ENCODE measurements at regions of chr11 and their contacts with region 1.

Region 1: DNA sequence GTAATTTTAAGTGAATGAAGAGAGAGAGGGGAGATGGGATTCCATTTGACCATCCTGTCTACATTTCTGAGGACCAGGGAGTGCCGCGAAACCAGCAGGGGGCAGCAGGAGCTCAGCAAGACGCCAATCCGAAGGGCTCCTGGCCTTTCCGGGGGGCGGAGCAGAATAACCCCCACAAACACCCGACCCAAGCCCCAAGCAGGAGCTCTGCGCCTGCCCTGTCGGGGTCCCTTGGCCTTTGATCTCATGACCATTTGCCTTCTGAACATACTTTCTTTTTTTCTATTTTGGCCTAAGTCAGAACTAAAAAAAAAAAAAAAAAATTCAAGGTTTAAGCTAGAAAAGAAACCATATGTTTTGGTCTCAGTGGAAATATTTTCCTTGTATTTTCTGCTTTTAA is 21.9 kb upstream of the SCN2B start:
- DNase-seq: peak; percentile 90
- ATAC-seq: peak; percentile 31
- H3K4me3 Mint-ChIP-seq: peak overlapping the region; percentile 43
- H3K27ac Mint-ChIP-seq: peak overlapping the region; percentile 72
- H3K4me1 Mint-ChIP-seq: peaks cover 17% of the 10 kb centered on the region
- H3K27me3 Mint-ChIP-seq: no peaks in the 10 kb centered on the region

Region 2: GRCh38 chr11:118136796-118137195 is 61.6 kb before region 1 on chr11:
- CTCF ChIA-PET with region 1: no interaction called
- POLR2A ChIA-PET with region 1: no interaction called
- DNase-seq: no peak
- ATAC-seq: no peak
- H3K4me3 Mint-ChIP-seq: no peak overlapping the region
- H3K27ac Mint-ChIP-seq: no peak overlapping the region
- H3K4me1 Mint-ChIP-seq: no peaks in the 10 kb centered on the region
- H3K27me3 Mint-ChIP-seq: peaks cover 38% of the 10 kb centered on the region

Region 3: GRCh38 chr11:118216621-118217481 is 18.5 kb after region 1 on chr11:
- CTCF ChIA-PET with region 1: interaction called, 128 read pairs
- POLR2A ChIA-PET with region 1: interaction called, 101 read pairs
- DNase-seq: peak; percentile 56
- ATAC-seq: peak; percentile 52
- H3K4me3 Mint-ChIP-seq: peak overlapping the region; percentile 76
- H3K27ac Mint-ChIP-seq: peak overlapping the region; percentile 94
- H3K4me1 Mint-ChIP-seq: peaks cover 98% of the 10 kb centered on the region
- H3K27me3 Mint-ChIP-seq: no peaks in the 10 kb centered on the region

Region 4: DNA sequence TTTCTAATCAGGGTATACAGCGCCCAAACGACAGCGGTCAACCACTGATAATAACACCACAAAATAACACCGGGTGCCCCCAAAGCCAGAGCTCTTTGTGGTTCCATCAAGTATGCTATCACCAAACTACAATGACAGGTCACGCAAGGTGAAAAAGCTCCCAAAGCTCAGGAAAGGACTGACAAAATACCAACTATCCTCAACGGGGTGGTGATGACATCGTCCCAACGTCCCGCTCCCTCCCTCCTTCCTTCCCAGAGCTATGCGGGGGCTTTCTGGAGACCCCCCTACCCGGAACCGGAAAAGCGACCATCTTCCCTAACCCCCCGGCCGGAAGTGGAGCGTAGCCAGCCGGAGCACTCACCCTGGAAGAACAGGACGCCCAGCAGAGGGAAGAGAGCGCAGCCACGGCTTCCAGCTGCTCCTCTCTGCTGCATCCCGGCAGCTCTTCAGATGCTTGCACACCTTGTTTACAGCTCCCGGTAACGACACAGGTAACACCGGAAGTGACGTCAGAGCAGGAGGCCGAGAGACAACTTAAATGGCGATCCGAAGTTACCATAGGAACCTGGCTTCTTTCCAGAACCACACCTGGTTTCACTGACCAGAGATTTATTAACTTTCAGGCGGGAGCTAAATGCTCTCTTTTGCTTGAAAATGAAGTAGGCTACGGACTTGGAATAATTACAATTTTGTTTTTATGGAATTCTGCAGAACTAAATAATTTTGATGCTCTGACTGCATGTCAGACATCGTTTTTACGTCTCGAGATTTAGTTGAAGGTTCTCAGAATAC is 53.7 kb after region 1 on chr11 and contains the start of gene MPZL3:
- CTCF ChIA-PET with region 1: interaction called, 74 read pairs
- POLR2A ChIA-PET with region 1: interaction called, 12 read pairs
- DNase-seq: peak; percentile 90
- ATAC-seq: peak; percentile 79
- H3K4me3 Mint-ChIP-seq: peak within 1 kb of the TSS; percentile 94
- H3K27ac Mint-ChIP-seq: peak within 1 kb of the TSS; percentile 99
- H3K4me1 Mint-ChIP-seq: peaks cover 42% of the 10 kb centered on the region
- H3K27me3 Mint-ChIP-seq: no peaks in the 10 kb centered on the region
- total RNA-seq, gene MPZL3: 19.6 to 20.0 TPM

Region 5: DNA sequence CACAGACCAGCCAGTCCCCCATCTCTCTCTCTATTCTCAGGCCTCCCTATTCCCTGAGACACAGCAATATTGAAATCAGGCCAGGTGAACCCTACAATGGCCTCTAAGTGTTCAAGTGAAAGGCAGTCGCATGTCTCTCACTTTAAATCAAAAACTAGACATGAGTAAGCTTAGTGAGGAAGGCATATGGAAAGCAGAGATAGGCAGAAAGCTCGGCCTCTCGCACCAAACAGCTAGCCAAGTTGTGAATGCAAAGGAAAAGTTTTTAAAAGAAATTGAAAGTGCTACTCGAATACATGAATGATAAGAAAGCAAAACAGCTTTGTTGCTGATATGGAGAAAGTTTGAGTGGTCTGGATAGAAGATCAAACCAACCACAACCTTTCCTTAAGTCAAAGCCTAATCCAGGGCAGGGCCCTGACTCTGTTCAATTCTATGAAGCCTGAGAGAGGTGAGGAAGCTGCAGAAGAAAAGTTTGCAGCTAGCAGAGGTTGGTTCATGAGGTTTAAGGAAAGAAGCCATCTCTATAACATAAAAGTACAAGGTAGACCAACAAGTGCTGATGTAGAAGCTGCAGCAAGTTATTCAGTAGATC is 85.5 kb after region 1 on chr11:
- CTCF ChIA-PET with region 1: interaction called, 52 read pairs
- POLR2A ChIA-PET with region 1: no interaction called
- DNase-seq: no peak
- ATAC-seq: peak; percentile 63
- H3K4me3 Mint-ChIP-seq: peak overlapping the region; percentile 19
- H3K27ac Mint-ChIP-seq: peak overlapping the region; percentile 78
- H3K4me1 Mint-ChIP-seq: peaks cover 44% of the 10 kb centered on the region
- H3K27me3 Mint-ChIP-seq: no peaks in the 10 kb centered on the region

Region 6: DNA sequence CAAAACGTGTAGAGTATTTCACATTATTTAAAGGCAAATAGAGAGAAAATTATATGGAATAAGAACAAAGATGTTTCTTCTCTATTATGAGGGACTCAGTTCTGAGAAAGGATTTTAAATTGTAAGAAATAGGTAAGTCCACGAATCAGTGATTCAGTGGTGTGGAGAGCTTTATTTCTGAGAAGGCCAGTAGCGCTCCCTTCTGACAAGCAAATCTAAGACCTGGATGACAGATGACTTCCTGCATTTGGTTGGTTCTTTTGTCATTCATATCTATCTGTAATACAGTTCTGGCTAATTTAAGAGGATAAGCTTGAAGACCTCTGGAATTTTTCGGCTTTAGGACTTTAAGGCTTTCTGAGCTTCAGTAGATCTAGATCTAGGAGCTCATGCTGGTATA is 113.1 kb after region 1 on chr11:
- CTCF ChIA-PET with region 1: interaction called, 16 read pairs
- POLR2A ChIA-PET with region 1: interaction called, 3 read pairs
- DNase-seq: no peak
- ATAC-seq: no peak
- H3K4me3 Mint-ChIP-seq: no peak overlapping the region
- H3K27ac Mint-ChIP-seq: no peak overlapping the region
- H3K4me1 Mint-ChIP-seq: peaks cover 94% of the 10 kb centered on the region
- H3K27me3 Mint-ChIP-seq: no peaks in the 10 kb centered on the region